Prostate gland (tissue), 2 donors: ENCODE measurements at regions of chr3 and their contacts with region 1.

Region 1: GRCh38 chr3:32502118-32502945 is at the start of gene CMTM6:
- DNase-seq: peak; percentile 80
- H3K4me3 ChIP-seq: peak within 1 kb of the TSS; percentile 63 to 78
- H3K27ac ChIP-seq: peak within 1 kb of the TSS; percentile 84 to 91
- H3K4me1 ChIP-seq: no peaks in the 10 kb centered on the region
- H3K27me3 ChIP-seq: no peaks in the 10 kb centered on the region
- CTCF ChIP-seq: no peak
- POLR2A ChIP-seq: peak; percentile 71
- total RNA-seq, gene CMTM6: 79.8 to 237 TPM

Region 2: DNA sequence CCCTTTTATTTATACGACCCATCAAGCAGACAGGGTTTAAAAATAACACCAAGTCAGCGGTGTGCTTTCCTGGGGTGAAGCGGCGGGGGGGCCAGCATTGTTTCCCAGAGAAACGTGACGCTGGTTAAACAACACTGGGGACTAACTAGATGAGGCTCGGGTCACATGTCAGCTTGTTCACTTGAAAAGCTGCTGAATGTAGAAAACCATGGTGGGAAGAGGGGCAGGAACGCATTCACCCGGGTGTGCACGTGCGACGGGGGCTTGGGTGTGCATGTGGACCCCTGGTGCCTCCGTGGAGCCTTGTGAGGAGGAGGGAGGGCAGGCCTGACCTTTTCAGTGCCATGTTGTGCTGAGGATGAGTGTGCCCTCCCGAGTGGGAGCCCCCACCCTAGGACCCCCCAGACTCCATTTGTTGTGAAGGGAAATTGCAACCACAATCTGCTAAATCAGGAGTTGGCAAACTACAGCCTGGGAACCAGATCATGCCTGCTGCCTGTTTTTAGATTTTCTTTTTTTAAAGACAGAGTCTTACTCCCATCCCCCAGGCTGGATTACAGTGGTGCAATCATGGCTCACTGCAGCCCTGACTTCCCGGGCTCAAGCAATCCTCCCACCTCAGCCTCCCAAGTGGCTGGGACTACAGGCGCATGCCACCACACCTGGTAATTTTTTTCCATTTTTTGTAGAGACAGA is 181.1 kb before region 1 on chr3:
- intact Hi-C with region 1: no loop called
- DNase-seq: no peak
- H3K4me3 ChIP-seq: no peak overlapping the region
- H3K27ac ChIP-seq: no peak overlapping the region
- H3K4me1 ChIP-seq: no peaks in the 10 kb centered on the region
- H3K27me3 ChIP-seq: no peaks in the 10 kb centered on the region
- CTCF ChIP-seq: no peak
- POLR2A ChIP-seq: no peak

Region 3: GRCh38 chr3:32557643-32558352 is 55.5 kb after region 1 on chr3:
- intact Hi-C with region 1: no loop called
- DNase-seq: no peak
- H3K4me3 ChIP-seq: no peak overlapping the region
- H3K27ac ChIP-seq: no peak overlapping the region
- H3K4me1 ChIP-seq: no peaks in the 10 kb centered on the region
- H3K27me3 ChIP-seq: no peaks in the 10 kb centered on the region
- CTCF ChIP-seq: no peak
- POLR2A ChIP-seq: no peak

Region 4: GRCh38 chr3:32570421-32571191 is 68.3 kb after region 1 on chr3 and contains the start of gene DYNC1LI1:
- intact Hi-C with region 1: loop called (anchors 5 kb)
- DNase-seq: peak; percentile 96
- H3K4me3 ChIP-seq: peak within 1 kb of the TSS; percentile 90 to 91
- H3K27ac ChIP-seq: peak within 1 kb of the TSS; percentile 97
- H3K4me1 ChIP-seq: no peaks in the 10 kb centered on the region
- H3K27me3 ChIP-seq: no peaks in the 10 kb centered on the region
- CTCF ChIP-seq: no peak
- POLR2A ChIP-seq: peak; percentile 63
- total RNA-seq, gene DYNC1LI1: 30.5 to 43.3 TPM

Region 5: DNA sequence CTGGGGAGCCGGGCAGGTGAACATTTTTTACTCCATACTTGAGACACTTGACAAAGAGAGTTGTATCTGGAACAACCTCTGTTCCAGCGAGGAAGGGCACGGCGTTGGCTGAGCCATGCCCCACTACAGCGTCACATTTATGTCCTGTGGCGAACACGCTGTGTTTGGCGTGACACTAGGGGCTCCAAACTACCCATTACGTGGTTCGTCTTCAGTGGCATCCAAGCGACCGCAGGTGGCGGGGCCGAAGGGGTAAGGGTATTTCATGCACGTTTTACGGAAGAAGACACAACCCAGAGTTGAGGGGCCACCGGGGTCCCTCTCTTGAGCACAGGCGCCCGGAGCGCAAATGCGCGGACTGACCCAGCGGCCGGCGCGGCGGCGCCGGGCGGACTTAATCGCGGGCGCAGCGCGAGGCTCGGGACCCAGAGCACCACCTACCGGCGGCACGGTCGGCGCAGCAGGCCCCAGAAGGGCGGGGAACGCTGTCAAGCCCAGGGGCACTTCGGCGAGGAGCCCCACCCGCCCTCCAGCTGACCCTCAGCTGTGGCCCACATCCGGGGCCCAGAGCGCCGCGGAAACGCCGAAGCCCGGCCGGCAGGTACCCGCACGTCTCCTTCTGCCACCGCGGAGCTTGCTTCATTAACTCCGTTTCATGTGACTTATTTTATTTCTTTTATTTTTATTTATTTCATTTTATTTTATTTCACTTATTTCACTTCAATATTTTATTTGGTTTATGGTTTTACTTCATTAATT is 279.1 kb after region 1 on chr3:
- intact Hi-C with region 1: loop called (anchors 5 kb)
- DNase-seq: peak; percentile 55
- H3K4me3 ChIP-seq: peak overlapping the region; percentile 28 to 41
- H3K27ac ChIP-seq: no peak overlapping the region
- H3K4me1 ChIP-seq: no peaks in the 10 kb centered on the region
- H3K27me3 ChIP-seq: no peaks in the 10 kb centered on the region
- CTCF ChIP-seq: peak; percentile 19 to 66 (median 55)
- POLR2A ChIP-seq: no peak